GM10248 (cell line): ENCODE measurements at regions of chr7 and their contacts with region 1.

Region 1: DNA sequence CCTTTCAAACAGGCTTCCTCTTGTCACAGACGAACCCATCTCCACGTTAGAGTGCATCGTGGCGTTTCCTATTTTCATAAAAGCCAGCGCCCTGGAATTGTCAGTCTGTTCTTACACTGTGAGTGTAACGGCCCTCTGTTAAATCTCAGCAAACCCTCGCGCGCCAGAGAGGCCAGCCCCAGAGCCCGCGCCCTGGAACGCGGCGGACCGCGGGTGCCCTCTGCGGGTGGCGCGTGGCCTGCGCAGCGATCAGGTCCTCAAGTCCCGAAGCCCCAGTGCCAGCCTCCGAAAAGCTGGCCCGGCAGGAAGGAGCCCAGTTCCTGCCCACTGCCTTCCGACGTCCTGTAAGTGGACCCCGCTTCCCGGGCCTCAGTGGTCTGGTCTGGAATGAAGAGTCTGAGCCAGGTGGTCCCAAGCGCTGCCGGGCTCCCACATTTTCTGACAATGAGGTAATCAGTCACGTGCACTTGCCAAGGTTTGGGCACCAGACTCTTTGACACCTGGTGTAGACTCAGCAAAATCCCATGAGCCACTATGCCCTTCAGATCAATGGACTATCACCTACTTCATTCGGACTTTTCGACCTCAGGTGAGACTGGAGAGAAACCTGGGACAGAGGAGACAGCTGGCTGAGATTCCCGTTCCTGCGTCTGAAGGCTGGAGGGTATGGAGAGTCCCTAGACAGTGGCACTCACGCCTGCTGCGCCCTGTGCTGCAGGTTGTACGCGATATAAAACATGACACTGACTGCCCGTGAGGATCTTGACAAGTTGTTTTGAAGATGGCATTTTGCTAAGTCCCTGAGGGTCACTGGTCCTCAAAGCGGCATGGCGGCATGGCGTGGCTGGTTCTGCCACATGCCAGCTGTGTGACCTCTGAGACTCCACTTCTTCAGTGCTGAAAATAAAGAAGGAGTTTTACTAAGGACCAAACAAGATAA is 109.4 kb upstream of the LANCL2 start:
- DNase-seq: peak; percentile 85
- CTCF ChIP-seq: peak; percentile 91

Region 2: GRCh38 chr7:54788664-54789063 is 467.1 kb before region 1 on chr7:
- CTCF ChIA-PET with region 1: interaction called, 73 read pairs
- POLR2A ChIA-PET with region 1: no interaction called
- DNase-seq: peak; percentile 54
- CTCF ChIP-seq: peak; percentile 38

Region 3: DNA sequence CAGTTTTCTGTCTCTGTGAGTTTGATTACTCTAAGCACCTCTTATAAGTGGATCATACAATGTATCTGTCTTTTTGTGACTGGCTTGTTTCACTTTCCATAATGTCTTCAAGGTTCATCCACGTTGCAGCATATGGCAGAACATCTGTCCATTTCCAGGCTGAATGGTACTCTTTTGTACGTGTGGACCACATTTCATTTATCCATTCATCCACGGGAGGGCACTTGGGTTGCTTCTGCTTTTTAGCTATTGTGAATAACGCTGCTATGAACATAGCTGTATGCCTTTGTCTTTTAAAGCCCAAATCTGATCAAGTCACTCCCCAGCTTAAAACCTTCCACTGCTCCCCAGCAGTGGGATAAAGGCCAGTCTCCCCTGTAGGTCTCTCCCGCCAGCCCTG is 205.5 kb before region 1 on chr7:
- CTCF ChIA-PET with region 1: interaction called, 14 read pairs
- POLR2A ChIA-PET with region 1: no interaction called
- DNase-seq: no peak
- CTCF ChIP-seq: peak; percentile 34

Region 4: DNA sequence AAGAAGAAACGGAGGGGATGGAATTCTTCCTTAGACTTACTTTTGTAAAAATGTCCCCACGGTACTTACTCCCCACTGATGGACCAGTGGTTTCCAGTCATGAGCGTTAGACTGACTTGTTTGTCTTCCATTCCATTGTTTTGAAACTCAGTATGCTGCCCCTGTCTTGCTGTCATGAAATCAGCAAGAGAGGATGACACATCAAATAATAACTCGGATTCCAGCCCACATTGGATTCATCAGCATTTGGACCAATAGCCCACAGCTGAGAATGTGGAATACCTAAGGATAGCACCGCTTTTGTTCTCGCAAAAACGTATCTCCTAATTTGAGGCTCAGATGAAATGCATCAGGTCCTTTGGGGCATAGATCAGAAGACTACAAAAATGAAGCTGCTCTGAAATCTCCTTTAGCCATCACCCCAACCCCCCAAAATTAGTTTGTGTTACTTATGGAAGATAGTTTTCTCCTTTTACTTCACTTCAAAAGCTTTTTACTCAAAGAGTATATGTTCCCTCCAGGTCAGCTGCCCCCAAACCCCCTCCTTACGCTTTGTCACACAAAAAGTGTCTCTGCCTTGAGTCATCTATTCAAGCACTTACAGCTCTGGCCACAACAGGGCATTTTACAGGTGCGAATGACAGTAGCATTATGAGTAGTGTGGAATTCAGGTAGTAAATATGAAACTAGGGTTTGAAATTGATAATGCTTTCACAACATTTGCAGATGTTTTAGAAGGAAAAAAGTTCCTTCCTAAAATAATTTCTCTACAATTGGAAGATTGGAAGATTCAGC is 49.3 kb before region 1 on chr7:
- CTCF ChIA-PET with region 1: interaction called, 11 read pairs
- POLR2A ChIA-PET with region 1: no interaction called
- DNase-seq: no peak
- CTCF ChIP-seq: no peak

Region 5: DNA sequence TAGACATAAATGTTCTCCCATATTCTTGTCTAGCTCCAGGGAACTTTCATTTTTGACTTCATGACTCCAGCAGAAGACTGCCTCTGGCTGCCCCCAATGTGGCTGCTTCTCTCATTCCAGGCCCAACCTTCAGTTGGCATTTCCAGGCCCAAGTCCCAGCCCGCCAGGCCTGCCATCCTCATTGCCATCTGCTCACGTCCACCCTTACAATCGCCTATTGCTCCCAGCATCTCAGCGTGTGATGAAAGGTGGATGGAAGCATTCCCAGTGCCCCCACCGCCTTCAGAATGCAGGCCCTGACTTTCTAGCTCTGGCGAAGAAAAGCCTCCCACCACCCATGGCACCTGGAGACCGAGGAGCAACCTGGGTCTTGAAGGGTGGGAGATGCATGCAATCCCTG is 22.8 kb before region 1 on chr7:
- CTCF ChIA-PET with region 1: interaction called, 27 read pairs
- POLR2A ChIA-PET with region 1: no interaction called
- DNase-seq: no peak
- CTCF ChIP-seq: no peak

Region 6: DNA sequence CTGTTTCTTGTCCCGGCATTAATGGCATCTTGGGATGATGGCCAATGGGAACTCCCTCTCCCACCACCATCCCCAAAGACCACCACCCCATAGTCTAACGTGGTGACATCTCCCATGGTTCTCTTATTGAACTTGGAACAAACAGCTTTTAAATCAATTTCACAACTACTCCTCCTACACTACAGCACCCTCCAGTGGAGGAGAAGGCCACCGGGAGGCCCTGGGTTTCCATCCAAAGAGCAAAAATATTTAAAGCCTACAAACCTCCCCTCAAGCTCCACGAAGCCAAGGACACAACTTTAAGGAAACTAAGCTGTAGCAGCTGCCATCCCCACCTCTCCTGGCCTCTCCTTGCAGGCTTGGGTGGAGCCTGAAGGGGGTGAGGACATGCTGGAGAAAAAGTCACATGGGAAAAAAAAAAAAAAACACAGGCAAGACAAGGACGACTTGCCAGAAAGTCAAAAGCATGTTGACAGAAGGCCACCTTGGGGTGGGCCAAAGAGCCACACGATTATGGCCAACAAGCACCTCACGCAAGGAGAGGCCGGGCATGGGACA is 15.4 kb after region 1 on chr7:
- CTCF ChIA-PET with region 1: interaction called, 32 read pairs
- POLR2A ChIA-PET with region 1: no interaction called
- DNase-seq: peak; percentile 23
- CTCF ChIP-seq: peak; percentile 39

Region 7: GRCh38 chr7:55299273-55299967 is 43.7 kb after region 1 on chr7:
- CTCF ChIA-PET with region 1: no interaction called
- POLR2A ChIA-PET with region 1: no interaction called
- DNase-seq: no peak
- CTCF ChIP-seq: no peak